Activated CD8-positive, alpha-beta T cell treated with anti-CD3 and anti-CD28 coated beads, Interleukin-2, amount 10 ng/mL, durations not matched to agents 7 days and 5 days (primary cell): ENCODE measurements at regions of chr4 and their contacts with region 1.

Region 1: DNA sequence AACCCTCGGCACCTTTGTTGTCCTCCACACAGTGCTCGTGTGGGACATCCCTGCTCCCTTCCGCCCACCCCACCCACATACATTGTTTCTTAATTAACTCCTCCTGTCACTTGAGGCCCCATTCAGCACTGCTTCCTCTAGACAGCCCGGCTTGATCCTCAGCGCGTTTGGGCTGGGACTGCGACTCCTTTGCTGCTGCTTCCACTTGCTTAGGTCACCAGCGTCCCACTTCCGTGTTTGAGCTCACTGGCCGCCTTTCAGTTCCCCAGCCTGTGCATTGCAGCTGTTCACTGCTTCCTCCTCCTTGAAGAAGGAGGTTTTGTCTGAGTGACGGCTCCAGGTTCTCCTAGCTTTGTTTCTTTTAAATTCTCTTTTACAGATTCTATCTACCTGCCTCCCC is 16.1 kb downstream of the RNF4 start:
- DNase-seq: peak; percentile 87
- ATAC-seq: peak; percentile 93
- H3K4me3 Mint-ChIP-seq: peak overlapping the region; percentile 38
- H3K27ac Mint-ChIP-seq: peak overlapping the region; percentile 83
- H3K4me1 Mint-ChIP-seq: peaks cover 83% of the 10 kb centered on the region
- H3K27me3 Mint-ChIP-seq: no peaks in the 10 kb centered on the region

Region 2: GRCh38 chr4:2462218-2462991 is 22.6 kb before region 1 on chr4:
- CTCF ChIA-PET with region 1: no interaction called
- POLR2A ChIA-PET with region 1: no interaction called
- DNase-seq: peak; percentile 67
- ATAC-seq: peak; percentile 98
- H3K4me3 Mint-ChIP-seq: peak overlapping the region; percentile 58
- H3K27ac Mint-ChIP-seq: no peak overlapping the region
- H3K4me1 Mint-ChIP-seq: peaks cover 13% of the 10 kb centered on the region
- H3K27me3 Mint-ChIP-seq: peaks cover 17% of the 10 kb centered on the region

Region 3: GRCh38 chr4:2510351-2511259 is 25.6 kb after region 1 on chr4:
- CTCF ChIA-PET with region 1: no interaction called
- POLR2A ChIA-PET with region 1: no interaction called
- DNase-seq: no peak
- ATAC-seq: no peak
- H3K4me3 Mint-ChIP-seq: no peak overlapping the region
- H3K27ac Mint-ChIP-seq: peak overlapping the region; percentile 20
- H3K4me1 Mint-ChIP-seq: peaks cover 16% of the 10 kb centered on the region
- H3K27me3 Mint-ChIP-seq: no peaks in the 10 kb centered on the region

Region 4: DNA sequence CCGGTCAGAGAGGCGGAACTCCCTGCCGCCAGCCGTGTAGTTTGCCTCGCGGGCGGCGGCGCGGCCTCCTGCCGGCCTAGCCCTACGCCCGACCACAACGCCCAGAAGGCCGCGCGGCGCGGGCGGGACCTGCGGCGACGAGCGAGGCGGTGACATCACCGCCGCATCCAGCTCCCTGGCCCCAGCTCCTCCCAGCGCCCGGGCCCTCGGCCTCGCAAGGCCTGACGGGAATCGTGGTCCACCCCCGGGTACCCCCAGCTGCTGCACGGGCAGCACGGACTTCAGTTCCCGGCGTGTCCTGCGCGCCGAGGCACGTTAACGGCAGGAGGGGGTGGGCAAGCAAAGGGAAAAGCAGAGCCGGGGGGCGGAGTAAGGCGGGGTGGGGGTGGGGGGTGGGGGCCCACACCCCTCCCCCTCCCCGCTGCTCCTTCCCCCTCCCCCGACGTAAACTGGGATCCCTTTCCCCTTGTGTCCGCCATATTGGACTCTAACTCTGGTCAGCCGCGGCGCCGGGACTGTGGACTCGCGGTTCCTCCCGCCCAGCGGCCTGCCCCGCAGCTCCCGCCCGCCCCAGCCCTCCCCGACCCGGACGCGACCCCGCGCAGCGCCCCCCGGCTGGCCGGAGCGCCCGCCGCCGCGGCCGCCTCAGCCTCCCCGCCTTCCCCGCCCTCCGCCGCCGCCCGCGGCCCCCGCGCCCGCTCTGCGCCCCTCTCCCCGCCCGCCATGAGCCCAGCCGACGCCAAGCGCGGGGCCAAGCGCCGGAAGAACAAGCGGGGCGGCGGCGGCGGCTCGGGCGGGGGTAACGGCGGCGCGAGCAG is 51.4 kb after region 1 on chr4 and contains the start of gene FAM193A:
- CTCF ChIA-PET with region 1: interaction called, 10 read pairs
- POLR2A ChIA-PET with region 1: interaction called, 3 read pairs
- DNase-seq: peak; percentile 99
- ATAC-seq: peak; percentile 95
- H3K4me3 Mint-ChIP-seq: peak within 1 kb of the TSS; percentile 88
- H3K27ac Mint-ChIP-seq: peak within 1 kb of the TSS; percentile 93
- H3K4me1 Mint-ChIP-seq: peaks cover 22% of the 10 kb centered on the region
- H3K27me3 Mint-ChIP-seq: no peaks in the 10 kb centered on the region
- total RNA-seq, gene FAM193A: 31.9 to 33.0 TPM

Region 5: DNA sequence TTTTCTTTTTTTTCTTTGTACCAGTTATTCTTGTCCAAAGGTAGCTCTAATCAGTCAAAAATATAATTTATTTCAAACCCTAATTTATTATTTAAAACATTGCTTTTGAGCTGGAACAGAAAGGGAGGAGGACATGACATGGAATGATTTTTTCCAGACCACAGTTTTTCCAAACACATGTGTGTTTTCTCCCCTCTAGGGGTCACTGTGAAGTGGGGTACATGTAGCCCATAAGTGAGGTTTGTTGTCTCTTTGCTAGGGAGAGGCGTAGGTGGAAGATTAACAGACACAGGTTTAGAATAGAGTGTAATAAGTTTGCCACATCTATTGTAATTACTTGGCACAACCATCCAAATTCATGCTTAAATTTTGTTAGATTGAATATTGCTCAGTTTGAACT is 188.2 kb after region 1 on chr4:
- CTCF ChIA-PET with region 1: no interaction called
- POLR2A ChIA-PET with region 1: no interaction called
- DNase-seq: no peak
- ATAC-seq: no peak
- H3K4me3 Mint-ChIP-seq: no peak overlapping the region
- H3K27ac Mint-ChIP-seq: no peak overlapping the region
- H3K4me1 Mint-ChIP-seq: peaks cover 4% of the 10 kb centered on the region
- H3K27me3 Mint-ChIP-seq: no peaks in the 10 kb centered on the region